ENCODE measurements at regions of chr19 and their contacts with region 1.

Region 1: DNA sequence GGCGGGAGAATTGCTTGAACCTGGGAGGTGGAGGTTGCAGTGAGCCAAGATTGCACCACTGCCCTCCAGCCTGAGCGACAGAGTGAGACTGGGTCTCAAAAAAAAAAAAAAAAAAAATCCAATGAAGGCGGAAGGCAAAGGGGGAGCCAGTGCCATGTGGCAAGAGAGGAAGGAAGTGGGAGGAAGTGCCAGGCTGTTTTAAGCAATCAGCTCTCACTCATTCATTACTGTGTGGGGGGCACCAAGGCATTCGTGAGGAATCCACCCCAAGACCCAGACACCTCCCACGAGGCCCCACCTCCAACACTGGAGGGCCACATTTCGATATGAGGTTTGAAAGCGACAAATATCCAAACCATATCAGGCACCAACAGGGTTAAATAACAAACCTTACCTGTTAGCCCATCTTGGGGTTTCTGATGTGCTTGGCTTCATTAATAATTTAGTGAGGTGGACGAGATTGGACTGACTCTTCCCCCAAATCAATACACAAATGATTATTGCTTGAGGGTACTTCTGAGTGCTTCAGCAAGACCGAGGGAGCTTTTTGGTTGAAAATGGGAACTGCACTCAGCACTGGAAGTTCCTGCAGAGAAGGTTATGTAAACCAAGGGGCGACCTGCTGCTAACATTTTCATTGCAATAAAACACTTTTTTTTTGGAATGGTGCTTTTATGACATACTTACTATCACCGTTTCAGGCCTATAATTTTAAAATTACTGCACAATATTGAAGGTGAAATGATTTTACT is 7.5 kb upstream of the LRP3 start:
- DNase-seq: peak; percentile 73

Region 2: GRCh38 chr19:32936065-32936464 is 250.5 kb before region 1 on chr19:
- intact Hi-C with region 1: no loop called
- DNase-seq: no peak

Region 3: GRCh38 chr19:33125929-33126388 is 60.6 kb before region 1 on chr19:
- intact Hi-C with region 1: loop called (anchors 10 kb)
- DNase-seq: no peak

Region 4: GRCh38 chr19:33143897-33144405 is 42.7 kb before region 1 on chr19:
- intact Hi-C with region 1: loop called (anchors 2 kb)
- DNase-seq: peak; percentile 90

Region 5: GRCh38 chr19:33208904-33209849 is 22.6 kb after region 1 on chr19:
- intact Hi-C with region 1: no loop called
- DNase-seq: no peak

Measured in cardiac septum (tissue), 1 donor.